ENCODE measurements at regions of chr6 and their contacts with region 1.

Region 1: DNA sequence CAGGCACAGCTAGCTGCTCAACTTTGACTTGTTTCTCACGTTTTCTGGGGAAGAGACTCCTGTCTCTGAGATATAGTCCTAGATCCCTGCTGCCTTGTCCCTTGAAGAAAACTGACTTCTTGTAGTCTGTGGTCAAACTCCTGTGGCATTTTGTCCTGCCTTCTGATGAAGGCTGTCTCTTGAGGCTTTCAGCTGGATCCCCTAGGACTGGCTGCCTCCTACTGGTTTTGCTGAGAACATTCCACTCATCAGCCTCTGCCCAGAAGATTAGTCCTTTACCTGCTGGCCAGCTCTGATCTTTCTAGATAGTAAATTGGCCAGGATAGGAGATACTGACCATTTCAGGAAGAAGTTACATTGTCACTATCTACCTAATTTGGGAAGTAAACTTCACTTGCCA is 71.9 kb upstream of the CNR1 start:
- DNase-seq: no peak
- ATAC-seq: peak; percentile 82
- H3K4me3 Mint-ChIP-seq: no peak overlapping the region
- H3K27ac Mint-ChIP-seq: no peak overlapping the region
- H3K4me1 Mint-ChIP-seq: peaks cover 5% of the 10 kb centered on the region
- H3K27me3 Mint-ChIP-seq: no peaks in the 10 kb centered on the region
- CTCF ChIP-seq: no peak

Region 2: GRCh38 chr6:87393022-87393622 is 844.9 kb before region 1 on chr6:
- CTCF ChIA-PET with region 1: interaction called, 12 read pairs
- POLR2A ChIA-PET with region 1: no interaction called
- intact Hi-C with region 1: loop called (anchors 1 kb)
- DNase-seq: no peak
- ATAC-seq: peak; percentile 94
- H3K4me3 Mint-ChIP-seq: no peak overlapping the region
- H3K27ac Mint-ChIP-seq: no peak overlapping the region
- H3K4me1 Mint-ChIP-seq: peaks cover 5% of the 10 kb centered on the region
- H3K27me3 Mint-ChIP-seq: no peaks in the 10 kb centered on the region
- CTCF ChIP-seq: peak; percentile 53

Region 3: DNA sequence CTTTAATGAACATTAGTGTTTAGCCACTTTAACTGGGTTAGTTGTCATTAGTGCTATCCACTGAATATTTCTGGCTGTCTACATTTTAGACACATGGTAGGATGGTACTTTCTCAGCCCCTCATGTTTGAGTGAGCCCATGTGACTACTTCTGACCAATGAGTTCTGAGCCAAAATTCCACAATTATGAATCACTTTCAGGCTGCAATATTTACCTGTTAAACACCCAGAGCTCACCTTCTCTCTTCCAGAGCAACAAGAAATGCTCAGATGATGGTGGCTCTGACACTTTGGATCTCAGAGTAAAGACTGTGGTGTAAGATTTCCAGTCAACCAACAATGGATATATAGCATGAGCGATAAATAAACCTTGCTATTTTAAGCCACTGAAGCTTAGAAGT is 165.6 kb before region 1 on chr6:
- CTCF ChIA-PET with region 1: no interaction called
- POLR2A ChIA-PET with region 1: no interaction called
- intact Hi-C with region 1: no loop called
- DNase-seq: no peak
- ATAC-seq: no peak
- H3K4me3 Mint-ChIP-seq: no peak overlapping the region
- H3K27ac Mint-ChIP-seq: no peak overlapping the region
- H3K4me1 Mint-ChIP-seq: no peaks in the 10 kb centered on the region
- H3K27me3 Mint-ChIP-seq: peaks cover 2% of the 10 kb centered on the region
- CTCF ChIP-seq: no peak

Region 4: DNA sequence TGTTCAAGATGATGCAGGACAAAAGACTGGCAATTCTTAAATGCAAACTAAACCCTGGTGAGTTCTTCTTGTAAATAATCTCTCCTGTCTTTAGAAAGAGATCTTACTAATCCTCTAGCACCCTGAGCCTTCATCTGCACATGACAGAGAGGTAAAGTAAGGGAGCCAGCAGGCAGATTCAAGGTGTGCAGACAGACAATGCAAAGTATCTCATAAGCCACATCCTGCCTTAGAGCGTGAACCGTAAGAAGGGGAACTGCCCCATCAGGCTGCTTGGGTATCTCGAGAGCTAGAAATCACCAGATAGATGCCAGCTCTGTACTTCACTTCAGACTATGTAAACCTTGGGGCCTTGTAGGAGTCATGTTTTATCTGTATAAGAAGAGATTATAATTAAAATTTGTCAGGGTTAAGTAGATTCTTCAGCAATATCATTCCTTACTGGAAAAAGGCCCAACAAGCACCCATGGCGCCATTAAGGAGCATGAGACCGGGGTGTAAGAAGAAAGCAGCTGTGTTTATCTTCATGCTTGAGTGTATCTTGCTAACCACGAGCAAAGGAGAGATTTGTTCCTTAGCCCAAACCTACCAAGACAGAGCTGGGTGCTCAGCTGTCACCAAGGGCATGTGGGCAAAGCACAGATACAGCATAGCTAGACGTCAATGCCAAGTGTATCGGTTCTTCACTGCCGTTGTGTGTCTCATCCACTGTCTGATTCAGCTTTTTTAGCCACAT is 96.3 kb before region 1 on chr6:
- CTCF ChIA-PET with region 1: interaction called, 5 read pairs
- POLR2A ChIA-PET with region 1: no interaction called
- intact Hi-C with region 1: loop called (anchors 5 kb)
- DNase-seq: peak; percentile 33
- ATAC-seq: peak; percentile 91
- H3K4me3 Mint-ChIP-seq: peak overlapping the region; percentile 73
- H3K27ac Mint-ChIP-seq: peak overlapping the region; percentile 96
- H3K4me1 Mint-ChIP-seq: peaks cover 65% of the 10 kb centered on the region
- H3K27me3 Mint-ChIP-seq: no peaks in the 10 kb centered on the region
- CTCF ChIP-seq: no peak

Region 5: GRCh38 chr6:88177961-88178464 is 60.1 kb before region 1 on chr6:
- CTCF ChIA-PET with region 1: interaction called, 5 read pairs
- POLR2A ChIA-PET with region 1: no interaction called
- intact Hi-C with region 1: loop called (anchors 1 kb)
- DNase-seq: no peak
- ATAC-seq: peak; percentile 75
- H3K4me3 Mint-ChIP-seq: peak overlapping the region; percentile 36
- H3K27ac Mint-ChIP-seq: peak overlapping the region; percentile 77
- H3K4me1 Mint-ChIP-seq: peaks cover 54% of the 10 kb centered on the region
- H3K27me3 Mint-ChIP-seq: no peaks in the 10 kb centered on the region
- CTCF ChIP-seq: no peak

Region 6: DNA sequence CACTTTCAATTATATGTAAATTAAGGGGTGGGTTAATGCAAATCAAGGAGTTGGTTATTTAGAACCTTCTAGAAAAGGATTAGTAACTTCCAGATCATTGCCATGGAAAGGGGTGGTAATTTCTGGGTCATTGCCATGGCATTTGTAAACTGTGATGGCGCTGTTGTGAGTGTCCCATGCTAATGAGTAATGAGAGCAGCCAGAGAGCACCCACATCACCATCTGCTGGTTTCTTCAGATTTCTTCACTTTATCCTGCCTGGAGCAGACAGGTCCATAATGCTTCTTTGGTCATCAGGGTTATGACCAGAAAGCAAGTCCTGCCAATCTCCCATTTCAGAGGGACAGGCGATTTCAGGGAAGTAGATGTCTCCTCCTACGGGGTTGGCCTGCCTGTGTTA is 239.3 kb after region 1 on chr6:
- CTCF ChIA-PET with region 1: no interaction called
- POLR2A ChIA-PET with region 1: no interaction called
- intact Hi-C with region 1: no loop called
- DNase-seq: no peak
- ATAC-seq: no peak
- H3K4me3 Mint-ChIP-seq: no peak overlapping the region
- H3K27ac Mint-ChIP-seq: no peak overlapping the region
- H3K4me1 Mint-ChIP-seq: no peaks in the 10 kb centered on the region
- H3K27me3 Mint-ChIP-seq: peaks cover 7% of the 10 kb centered on the region
- CTCF ChIP-seq: no peak

Region 7: GRCh38 chr6:88870717-88871330 is 632.8 kb after region 1 on chr6:
- CTCF ChIA-PET with region 1: interaction called, 4 read pairs
- POLR2A ChIA-PET with region 1: no interaction called
- intact Hi-C with region 1: loop called (anchors 2 kb)
- DNase-seq: no peak
- ATAC-seq: peak; percentile 42
- H3K4me3 Mint-ChIP-seq: no peak overlapping the region
- H3K27ac Mint-ChIP-seq: no peak overlapping the region
- H3K4me1 Mint-ChIP-seq: peaks cover 10% of the 10 kb centered on the region
- H3K27me3 Mint-ChIP-seq: no peaks in the 10 kb centered on the region
- CTCF ChIP-seq: no peak